Calu3 (cell line): ENCODE measurements at regions of chr1 and their contacts with region 1.

Region 1: GRCh38 chr1:195075973-195076372 is 1532.3 kb downstream of the KCNT2 start:
- DNase-seq: no peak
- H3K4me3 Mint-ChIP-seq: no peak overlapping the region
- H3K27ac Mint-ChIP-seq: no peak overlapping the region
- H3K4me1 Mint-ChIP-seq: peaks cover 8% of the 10 kb centered on the region
- H3K27me3 Mint-ChIP-seq: no peaks in the 10 kb centered on the region
- CTCF ChIP-seq: no peak

Region 2: DNA sequence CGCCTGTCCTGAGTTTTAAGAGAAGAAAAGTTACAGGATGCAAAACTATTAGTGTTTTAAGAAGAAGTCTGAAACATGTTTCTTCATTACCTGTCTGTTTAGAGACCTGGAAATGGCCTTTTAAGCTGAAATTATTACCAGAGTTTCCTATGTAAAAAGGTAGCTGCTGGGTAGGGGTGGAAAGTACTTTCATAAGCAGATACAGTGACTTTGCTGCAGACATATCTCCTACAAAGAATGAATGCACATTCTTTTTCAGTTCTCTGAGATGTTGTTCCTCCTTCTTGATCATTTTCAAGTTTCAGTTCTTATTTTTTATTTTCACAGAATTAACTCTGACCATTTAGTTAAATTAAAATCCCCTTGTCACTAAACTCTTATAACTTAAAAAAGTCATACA is 202.7 kb after region 1 on chr1:
- CTCF ChIA-PET with region 1: no interaction called
- intact Hi-C with region 1: loop called (anchors 5 kb)
- DNase-seq: no peak
- H3K4me3 Mint-ChIP-seq: no peak overlapping the region
- H3K27ac Mint-ChIP-seq: no peak overlapping the region
- H3K4me1 Mint-ChIP-seq: no peaks in the 10 kb centered on the region
- H3K27me3 Mint-ChIP-seq: no peaks in the 10 kb centered on the region
- CTCF ChIP-seq: no peak